Activated naive CD4-positive, alpha-beta T cell treated with anti-CD3 and anti-CD28 coated beads, Interleukin-2, amount 10 ng/mL, durations not matched to agents 7 days and 5 days (primary cell): ENCODE measurements at regions of chr11 and their contacts with region 1.

Region 1: GRCh38 chr11:128172046-128172878 is 415.1 kb downstream of the ETS1 start:
- DNase-seq: peak; percentile 92
- H3K4me3 Mint-ChIP-seq: no peak overlapping the region
- H3K27ac Mint-ChIP-seq: no peak overlapping the region
- H3K4me1 Mint-ChIP-seq: peaks cover 2% of the 10 kb centered on the region
- H3K27me3 Mint-ChIP-seq: peaks cover 7% of the 10 kb centered on the region

Region 2: DNA sequence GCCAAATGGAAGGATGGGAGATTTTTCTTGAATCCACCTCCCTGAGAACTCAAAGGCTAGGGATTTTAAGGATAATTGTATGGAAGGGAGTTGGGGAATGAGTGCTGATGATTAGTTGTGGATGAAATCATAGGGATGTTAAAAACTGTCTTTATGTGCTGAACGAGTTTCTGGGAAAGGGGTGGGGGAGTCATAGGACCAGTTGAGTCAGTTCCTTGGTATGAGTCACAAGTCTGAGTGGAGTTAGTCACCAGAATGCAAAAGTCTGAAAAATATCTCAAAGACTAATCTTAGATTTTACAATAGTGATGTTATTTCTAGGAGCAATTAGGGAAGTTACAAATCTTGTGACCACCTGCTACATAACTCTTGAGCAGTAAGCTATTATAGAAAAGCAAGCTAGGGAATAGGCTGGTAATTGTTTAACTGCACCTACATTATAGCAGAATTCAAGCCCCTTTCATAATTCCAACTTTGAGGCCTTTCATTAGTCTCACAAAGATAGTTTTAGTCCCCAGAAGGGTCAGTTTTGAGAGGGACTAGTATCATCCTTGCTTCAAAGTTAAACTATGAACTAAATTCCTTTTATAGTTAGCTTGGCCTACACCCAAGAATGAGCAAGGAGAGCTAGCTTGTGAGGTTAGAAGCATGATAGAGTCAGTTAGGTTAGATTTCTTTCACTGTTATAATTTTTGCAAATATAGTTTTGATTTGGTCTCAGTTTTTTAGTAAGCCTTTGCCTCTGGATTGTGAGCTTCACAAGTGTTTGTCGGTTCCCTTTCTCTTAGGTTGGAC is 252.9 kb before region 1 on chr11:
- CTCF ChIA-PET with region 1: no interaction called
- DNase-seq: no peak
- H3K4me3 Mint-ChIP-seq: no peak overlapping the region
- H3K27ac Mint-ChIP-seq: no peak overlapping the region
- H3K4me1 Mint-ChIP-seq: no peaks in the 10 kb centered on the region
- H3K27me3 Mint-ChIP-seq: no peaks in the 10 kb centered on the region

Region 3: GRCh38 chr11:128039140-128040021 is 132.9 kb before region 1 on chr11:
- CTCF ChIA-PET with region 1: interaction called, 14 read pairs
- DNase-seq: peak; percentile 88
- H3K4me3 Mint-ChIP-seq: peak overlapping the region; percentile 60
- H3K27ac Mint-ChIP-seq: peak overlapping the region; percentile 96
- H3K4me1 Mint-ChIP-seq: peaks cover 49% of the 10 kb centered on the region
- H3K27me3 Mint-ChIP-seq: no peaks in the 10 kb centered on the region

Region 4: GRCh38 chr11:128290106-128290840 is 118.0 kb after region 1 on chr11:
- CTCF ChIA-PET with region 1: interaction called, 15 read pairs
- DNase-seq: peak; percentile 82
- H3K4me3 Mint-ChIP-seq: peak overlapping the region; percentile 85
- H3K27ac Mint-ChIP-seq: peak overlapping the region; percentile 96
- H3K4me1 Mint-ChIP-seq: peaks cover 92% of the 10 kb centered on the region
- H3K27me3 Mint-ChIP-seq: no peaks in the 10 kb centered on the region

Region 5: DNA sequence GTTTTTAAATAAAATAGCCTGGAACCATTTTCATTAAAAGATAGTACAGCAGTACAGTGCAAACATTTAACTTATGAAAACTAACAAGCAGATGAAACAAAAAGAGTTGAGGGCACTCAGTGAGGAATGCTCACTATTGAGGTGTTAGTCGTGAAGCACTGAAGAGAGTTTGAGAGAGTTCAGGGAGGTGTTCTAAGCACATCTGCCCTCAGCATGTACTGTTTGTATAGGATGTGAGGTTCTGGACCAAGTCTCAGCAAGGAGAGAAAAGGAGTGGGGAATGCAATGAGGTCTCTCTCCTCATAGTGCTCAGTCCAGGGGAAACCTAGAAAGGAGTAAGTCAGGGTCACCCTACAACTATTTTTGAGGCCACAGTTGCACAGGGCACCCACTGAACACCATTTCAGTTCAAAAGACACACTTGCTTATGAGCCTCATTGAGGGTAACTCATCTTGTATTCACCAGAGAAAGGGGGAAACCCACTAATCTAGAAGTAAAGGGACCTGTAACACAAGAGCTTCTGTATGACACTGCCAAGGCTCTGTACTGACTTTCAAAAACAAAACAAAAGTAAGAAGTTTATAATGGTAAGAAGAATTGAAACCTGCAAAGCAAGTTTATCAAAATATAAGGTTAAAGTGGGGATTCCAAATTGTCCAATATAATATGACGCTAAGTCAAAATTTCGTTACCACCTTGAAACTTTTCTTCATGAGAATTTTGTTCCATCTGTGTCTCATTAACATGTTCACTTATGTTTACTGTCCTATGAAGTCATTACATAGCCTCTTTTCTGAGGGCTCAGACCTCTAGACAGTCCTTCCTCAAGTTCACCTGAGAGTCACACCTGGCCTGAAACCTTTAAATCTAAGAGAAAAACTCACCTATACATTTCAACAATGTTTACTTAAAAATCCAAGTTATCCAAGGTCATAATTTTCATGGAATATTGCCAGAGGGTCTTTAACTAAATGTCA is 139.8 kb after region 1 on chr11:
- CTCF ChIA-PET with region 1: no interaction called
- DNase-seq: no peak
- H3K4me3 Mint-ChIP-seq: no peak overlapping the region
- H3K27ac Mint-ChIP-seq: peak overlapping the region; percentile 56
- H3K4me1 Mint-ChIP-seq: peaks cover 70% of the 10 kb centered on the region
- H3K27me3 Mint-ChIP-seq: no peaks in the 10 kb centered on the region

Region 6: GRCh38 chr11:128389461-128389976 is 217.3 kb after region 1 on chr11:
- CTCF ChIA-PET with region 1: no interaction called
- DNase-seq: no peak
- H3K4me3 Mint-ChIP-seq: no peak overlapping the region
- H3K27ac Mint-ChIP-seq: no peak overlapping the region
- H3K4me1 Mint-ChIP-seq: peaks cover 4% of the 10 kb centered on the region
- H3K27me3 Mint-ChIP-seq: no peaks in the 10 kb centered on the region

Region 7: GRCh38 chr11:128776424-128777284 is 604.4 kb after region 1 on chr11:
- CTCF ChIA-PET with region 1: interaction called, 12 read pairs
- DNase-seq: peak; percentile 33
- H3K4me3 Mint-ChIP-seq: no peak overlapping the region
- H3K27ac Mint-ChIP-seq: peak overlapping the region; percentile 50
- H3K4me1 Mint-ChIP-seq: peaks cover 45% of the 10 kb centered on the region
- H3K27me3 Mint-ChIP-seq: no peaks in the 10 kb centered on the region

Region 8: GRCh38 chr11:128831174-128832120 is 659.2 kb after region 1 on chr11:
- CTCF ChIA-PET with region 1: interaction called, 45 read pairs
- DNase-seq: peak; percentile 91
- H3K4me3 Mint-ChIP-seq: peak overlapping the region; percentile 33
- H3K27ac Mint-ChIP-seq: peak overlapping the region; percentile 86
- H3K4me1 Mint-ChIP-seq: peaks cover 37% of the 10 kb centered on the region
- H3K27me3 Mint-ChIP-seq: peaks cover 8% of the 10 kb centered on the region

Region 9: DNA sequence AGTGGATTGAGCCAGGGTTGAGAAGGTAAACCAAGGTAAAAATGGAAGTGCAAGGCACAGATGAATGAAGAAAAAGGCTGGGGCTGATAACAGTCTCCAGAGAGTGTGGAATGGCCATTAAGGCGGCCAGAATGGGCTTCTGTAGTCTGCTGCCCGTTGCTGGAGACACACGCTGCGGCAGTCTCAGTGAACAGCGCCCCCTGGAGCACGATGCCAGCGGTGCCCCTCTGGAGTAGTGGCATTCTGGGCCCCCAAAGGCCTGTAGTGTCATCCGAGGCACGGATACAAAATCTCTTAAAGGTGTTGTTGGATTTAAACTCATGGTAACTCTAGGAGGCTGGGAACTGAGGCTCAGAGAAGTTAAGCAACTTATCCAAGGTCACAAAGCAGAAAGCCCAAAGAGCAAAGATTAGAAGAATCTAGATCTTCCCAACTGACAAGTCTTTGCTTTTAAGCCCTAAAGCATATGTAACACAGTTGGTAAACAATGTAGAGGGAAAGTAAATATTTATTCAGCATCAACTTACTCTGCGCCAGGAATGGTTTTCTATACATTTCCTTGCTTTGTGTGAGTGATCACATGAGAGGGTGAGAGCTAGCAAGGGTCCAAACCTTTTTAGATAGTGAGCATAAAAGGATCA is 676.7 kb after region 1 on chr11:
- CTCF ChIA-PET with region 1: interaction called, 10 read pairs
- DNase-seq: peak; percentile 71
- H3K4me3 Mint-ChIP-seq: no peak overlapping the region
- H3K27ac Mint-ChIP-seq: no peak overlapping the region
- H3K4me1 Mint-ChIP-seq: peaks cover 31% of the 10 kb centered on the region
- H3K27me3 Mint-ChIP-seq: peaks cover 7% of the 10 kb centered on the region